ENCODE measurements at regions of chr6 and their contacts with region 1.

Region 1: GRCh38 chr6:37550191-37550965 is 50.7 kb upstream of the CCDC167 start:
- DNase-seq: no peak
- H3K4me3 Mint-ChIP-seq: no peak overlapping the region
- H3K27ac Mint-ChIP-seq: no peak overlapping the region
- H3K4me1 Mint-ChIP-seq: peaks cover 41% of the 10 kb centered on the region
- H3K27me3 Mint-ChIP-seq: peaks cover 11% of the 10 kb centered on the region

Region 2: DNA sequence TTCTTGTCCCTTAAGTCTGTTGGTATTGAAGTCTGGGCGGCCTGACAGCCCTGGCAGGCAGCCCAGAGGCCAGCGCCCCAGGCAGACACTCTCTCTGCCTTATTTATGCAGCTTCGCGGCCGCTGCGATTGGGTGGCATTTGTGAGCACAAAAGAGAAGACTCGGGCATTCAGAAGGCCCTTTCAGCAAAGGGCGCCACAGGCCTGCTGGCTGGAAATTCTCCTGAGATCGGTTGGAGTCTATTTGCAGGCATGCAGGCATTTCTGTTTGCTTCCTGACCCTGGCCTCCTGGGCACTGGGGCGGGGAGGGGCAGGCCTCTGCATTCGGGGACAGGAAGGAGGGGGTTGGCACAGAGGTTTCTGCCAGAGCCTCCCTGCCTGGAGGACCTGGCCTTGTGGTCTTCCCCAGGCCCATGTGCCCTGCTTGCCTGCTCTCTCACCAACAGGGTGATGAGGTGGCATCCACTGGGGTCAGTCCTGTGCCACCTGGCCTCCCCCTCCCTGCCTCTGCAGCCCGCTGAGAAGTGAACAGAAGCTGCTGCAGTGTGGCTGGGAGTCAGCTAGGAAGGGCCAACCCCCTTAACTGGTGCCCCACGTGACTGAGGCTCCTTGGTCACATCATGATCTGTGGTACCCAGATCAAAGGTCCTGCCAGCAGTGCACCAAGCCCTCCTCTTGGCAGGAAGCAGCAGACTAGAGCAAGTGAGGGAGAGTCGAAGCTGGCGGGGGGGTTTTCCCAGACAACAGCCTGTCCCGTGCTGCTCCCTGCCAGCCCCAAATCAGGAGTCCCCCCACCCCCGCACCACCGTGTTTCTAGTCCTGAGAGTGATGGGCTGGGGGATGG is 34.1 kb before region 1 on chr6:
- intact Hi-C with region 1: loop called (anchors 1 kb)
- DNase-seq: peak; percentile 81
- H3K4me3 Mint-ChIP-seq: peak overlapping the region; percentile 75
- H3K27ac Mint-ChIP-seq: peak overlapping the region; percentile 92
- H3K4me1 Mint-ChIP-seq: peaks cover 57% of the 10 kb centered on the region
- H3K27me3 Mint-ChIP-seq: peaks cover 9% of the 10 kb centered on the region

Region 3: GRCh38 chr6:37560737-37561103 is 10.3 kb after region 1 on chr6:
- intact Hi-C with region 1: no loop called
- DNase-seq: no peak
- H3K4me3 Mint-ChIP-seq: no peak overlapping the region
- H3K27ac Mint-ChIP-seq: no peak overlapping the region
- H3K4me1 Mint-ChIP-seq: peaks cover 9% of the 10 kb centered on the region
- H3K27me3 Mint-ChIP-seq: peaks cover 24% of the 10 kb centered on the region